Prostate gland (tissue), 2 donors: ENCODE measurements at regions of chr7 and their contacts with region 1.

Region 1: DNA sequence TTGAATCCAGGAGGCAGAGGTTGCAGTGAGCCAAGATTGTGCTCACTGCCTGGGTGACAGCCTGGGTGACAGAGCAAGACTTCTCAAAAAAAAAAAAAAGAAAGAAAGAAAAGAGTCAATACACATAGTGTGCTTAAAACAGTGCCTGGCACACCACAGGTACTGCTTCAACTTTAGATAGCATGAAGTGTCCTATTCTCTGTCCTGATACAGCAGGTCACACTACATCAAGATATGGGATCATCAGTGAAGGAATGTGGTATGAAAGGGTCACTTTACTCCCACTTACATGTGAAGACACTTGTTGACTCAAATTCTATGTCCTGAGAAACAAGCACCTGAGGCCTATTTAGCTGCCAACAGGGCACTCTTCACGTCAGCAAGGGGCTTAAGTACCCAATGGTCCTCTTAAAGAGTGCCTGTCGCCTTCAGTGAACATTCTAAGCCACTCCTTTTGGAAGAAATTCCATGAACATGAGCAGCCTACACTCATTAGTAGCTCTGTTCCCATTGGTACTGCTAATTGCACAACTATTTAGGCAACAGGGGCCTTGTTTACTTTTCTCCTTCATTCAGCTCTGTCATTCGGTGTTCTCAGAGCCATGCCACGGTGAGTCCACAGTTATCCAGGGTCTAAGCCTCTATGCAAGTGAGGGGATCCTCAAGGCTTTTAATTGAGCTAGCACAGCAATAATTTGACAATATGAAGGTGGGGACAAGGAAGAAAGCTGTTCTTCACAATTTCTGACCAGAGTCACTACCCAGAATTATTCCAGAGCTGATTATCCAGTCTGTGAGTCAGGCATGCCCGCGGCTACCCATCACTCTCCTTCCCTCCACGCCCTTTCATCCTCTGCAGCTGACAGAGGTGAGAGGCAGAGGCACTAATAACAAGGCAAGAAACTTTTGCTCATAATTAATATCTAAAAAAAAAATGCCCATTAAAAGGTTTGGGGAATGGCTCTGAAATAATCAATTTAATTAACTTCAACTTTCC is 56.6 kb upstream of the PTN start:
- DNase-seq: no peak
- H3K4me3 ChIP-seq: no peak overlapping the region
- H3K27ac ChIP-seq: no peak overlapping the region
- H3K4me1 ChIP-seq: no peaks in the 10 kb centered on the region
- H3K27me3 ChIP-seq: no peaks in the 10 kb centered on the region
- CTCF ChIP-seq: no peak
- POLR2A ChIP-seq: no peak

Region 2: GRCh38 chr7:137036768-137037167 is 363.4 kb before region 1 on chr7:
- intact Hi-C with region 1: loop called (anchors 5 kb)
- DNase-seq: no peak
- H3K4me3 ChIP-seq: no peak overlapping the region
- H3K27ac ChIP-seq: no peak overlapping the region
- H3K4me1 ChIP-seq: no peaks in the 10 kb centered on the region
- H3K27me3 ChIP-seq: no peaks in the 10 kb centered on the region
- CTCF ChIP-seq: no peak
- POLR2A ChIP-seq: no peak

Region 3: DNA sequence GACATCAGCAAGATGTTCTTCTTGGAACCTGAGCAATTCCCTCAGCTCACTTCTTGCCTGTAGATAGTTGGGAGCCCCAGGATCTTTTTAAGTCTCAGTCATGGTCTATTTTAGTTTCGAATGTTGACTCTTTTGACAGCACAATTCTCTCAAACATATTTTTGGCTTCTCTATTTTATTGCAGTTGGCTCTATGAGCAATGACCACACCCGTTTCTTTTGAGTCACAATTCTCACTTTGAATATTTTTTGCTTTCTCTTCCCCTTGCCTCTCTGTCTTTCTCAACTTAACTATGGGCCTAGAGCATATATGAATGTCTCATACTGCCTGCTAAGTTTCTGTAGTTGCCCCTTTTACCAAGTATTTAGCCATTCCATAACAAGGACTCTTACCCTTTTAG is 279.4 kb before region 1 on chr7:
- intact Hi-C with region 1: no loop called
- DNase-seq: no peak
- H3K4me3 ChIP-seq: no peak overlapping the region
- H3K27ac ChIP-seq: no peak overlapping the region
- H3K4me1 ChIP-seq: no peaks in the 10 kb centered on the region
- H3K27me3 ChIP-seq: no peaks in the 10 kb centered on the region
- CTCF ChIP-seq: no peak
- POLR2A ChIP-seq: no peak

Region 4: DNA sequence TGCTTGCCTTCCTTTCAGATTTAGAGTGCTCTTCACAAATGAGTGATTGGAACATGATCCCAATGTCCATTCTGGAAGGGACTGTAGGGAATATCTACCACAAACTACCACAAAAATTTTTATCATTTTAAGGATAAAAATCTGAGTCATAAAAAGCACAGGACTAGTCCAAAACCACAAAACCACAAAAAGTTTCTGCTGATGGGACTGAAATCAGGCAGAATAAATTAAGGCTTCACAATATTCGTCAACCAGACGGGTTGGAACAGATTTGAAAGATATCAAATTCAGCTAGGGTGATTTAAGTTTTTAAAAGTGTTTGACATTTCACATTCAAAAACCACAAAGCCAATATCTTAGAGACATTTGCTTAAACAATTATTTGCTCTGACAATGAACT is 43.5 kb after region 1 on chr7:
- intact Hi-C with region 1: no loop called
- DNase-seq: no peak
- H3K4me3 ChIP-seq: no peak overlapping the region
- H3K27ac ChIP-seq: no peak overlapping the region
- H3K4me1 ChIP-seq: no peaks in the 10 kb centered on the region
- H3K27me3 ChIP-seq: no peaks in the 10 kb centered on the region
- CTCF ChIP-seq: no peak
- POLR2A ChIP-seq: no peak